CD4-positive, alpha-beta T cell (primary cell): ENCODE measurements at regions of chr1 and their contacts with region 1.

Region 1: GRCh38 chr1:206544562-206545257 is 37.4 kb downstream of the RASSF5 start:
- DNase-seq: peak; percentile 68 to 89 (median 81)
- ATAC-seq: peak; percentile 96
- H3K4me3 ChIP-seq: no peak overlapping the region
- H3K4me3 Mint-ChIP-seq: no peak overlapping the region
- H3K27ac ChIP-seq: no peak overlapping the region
- H3K27ac Mint-ChIP-seq: no peak overlapping the region
- H3K4me1 ChIP-seq: peaks cover 11% of the 10 kb centered on the region
- H3K4me1 Mint-ChIP-seq: peaks cover 24% of the 10 kb centered on the region
- H3K27me3 ChIP-seq: no peaks in the 10 kb centered on the region
- H3K27me3 Mint-ChIP-seq: no peaks in the 10 kb centered on the region
- CTCF ChIP-seq: peak; percentile 95

Region 2: GRCh38 chr1:206489980-206490770 is 54.5 kb before region 1 on chr1:
- CTCF ChIA-PET with region 1: interaction called, 6 read pairs
- POLR2A ChIA-PET with region 1: no interaction called
- intact Hi-C with region 1: loop called (anchors 5 to 10 kb)
- DNase-seq: peak; percentile 53 to 79 (median 63)
- ATAC-seq: peak; percentile 92
- H3K4me3 ChIP-seq: no peak overlapping the region
- H3K4me3 Mint-ChIP-seq: no peak overlapping the region
- H3K27ac ChIP-seq: no peak overlapping the region
- H3K27ac Mint-ChIP-seq: no peak overlapping the region
- H3K4me1 ChIP-seq: peaks cover 4% of the 10 kb centered on the region
- H3K4me1 Mint-ChIP-seq: no peaks in the 10 kb centered on the region
- H3K27me3 ChIP-seq: no peaks in the 10 kb centered on the region
- H3K27me3 Mint-ChIP-seq: no peaks in the 10 kb centered on the region
- CTCF ChIP-seq: peak; percentile 68

Region 3: GRCh38 chr1:206556750-206557635 is 12.3 kb after region 1 on chr1:
- CTCF ChIA-PET with region 1: interaction called, 44 read pairs
- POLR2A ChIA-PET with region 1: interaction called, 37 read pairs
- intact Hi-C with region 1: loop called in 1 of 2 experiments (anchors 1 kb)
- DNase-seq: peak; percentile 72 to 96 (median 90)
- ATAC-seq: peak; percentile 69
- H3K4me3 ChIP-seq: peak overlapping the region; percentile 94
- H3K4me3 Mint-ChIP-seq: peak overlapping the region; percentile 97
- H3K27ac ChIP-seq: peak overlapping the region; percentile 69 to 99
- H3K27ac Mint-ChIP-seq: peak overlapping the region; percentile 86
- H3K4me1 ChIP-seq: peaks cover 77% of the 10 kb centered on the region
- H3K4me1 Mint-ChIP-seq: peaks cover 86% of the 10 kb centered on the region
- H3K27me3 ChIP-seq: no peaks in the 10 kb centered on the region
- H3K27me3 Mint-ChIP-seq: no peaks in the 10 kb centered on the region
- CTCF ChIP-seq: no peak

Region 4: GRCh38 chr1:206583707-206584648 is 39.3 kb after region 1 on chr1:
- CTCF ChIA-PET with region 1: interaction called, 236 read pairs
- POLR2A ChIA-PET with region 1: interaction called, 33 read pairs
- intact Hi-C with region 1: loop called (anchors 1 kb)
- DNase-seq: peak; percentile 77 to 94 (median 86)
- ATAC-seq: peak; percentile 33
- H3K4me3 ChIP-seq: no peak overlapping the region
- H3K4me3 Mint-ChIP-seq: peak overlapping the region; percentile 84
- H3K27ac ChIP-seq: peak overlapping the region; percentile 93 to 95
- H3K27ac Mint-ChIP-seq: peak overlapping the region; percentile 86
- H3K4me1 ChIP-seq: peaks cover 78% of the 10 kb centered on the region
- H3K4me1 Mint-ChIP-seq: peaks cover 66% of the 10 kb centered on the region
- H3K27me3 ChIP-seq: no peaks in the 10 kb centered on the region
- H3K27me3 Mint-ChIP-seq: no peaks in the 10 kb centered on the region
- CTCF ChIP-seq: peak; percentile 88

Region 5: GRCh38 chr1:206663832-206664652 is 119.3 kb after region 1 on chr1:
- CTCF ChIA-PET with region 1: interaction called, 15 read pairs
- POLR2A ChIA-PET with region 1: no interaction called
- intact Hi-C with region 1: loop called (anchors 2 to 5 kb)
- DNase-seq: peak; percentile 53 to 85 (median 64)
- ATAC-seq: peak; percentile 91
- H3K4me3 ChIP-seq: no peak overlapping the region
- H3K4me3 Mint-ChIP-seq: no peak overlapping the region
- H3K27ac ChIP-seq: no peak overlapping the region
- H3K27ac Mint-ChIP-seq: no peak overlapping the region
- H3K4me1 ChIP-seq: peaks cover 20% of the 10 kb centered on the region
- H3K4me1 Mint-ChIP-seq: peaks cover 4% of the 10 kb centered on the region
- H3K27me3 ChIP-seq: peaks cover 16 to 20% of the 10 kb centered on the region in 2 experiments
- H3K27me3 Mint-ChIP-seq: peaks cover 31% of the 10 kb centered on the region
- CTCF ChIP-seq: peak; percentile 93

Region 6: GRCh38 chr1:206866062-206866461 is 321.4 kb after region 1 on chr1:
- CTCF ChIA-PET with region 1: no interaction called
- POLR2A ChIA-PET with region 1: no interaction called
- intact Hi-C with region 1: no loop called
- DNase-seq: no peak
- ATAC-seq: no peak
- H3K4me3 ChIP-seq: no peak overlapping the region
- H3K4me3 Mint-ChIP-seq: no peak overlapping the region
- H3K27ac ChIP-seq: no peak overlapping the region
- H3K27ac Mint-ChIP-seq: no peak overlapping the region
- H3K4me1 ChIP-seq: peaks cover 5% of the 10 kb centered on the region
- H3K4me1 Mint-ChIP-seq: peaks cover 7% of the 10 kb centered on the region
- H3K27me3 ChIP-seq: no peaks in the 10 kb centered on the region
- H3K27me3 Mint-ChIP-seq: peaks cover 12% of the 10 kb centered on the region
- CTCF ChIP-seq: no peak